ENCODE measurements at regions of chr1 and their contacts with region 1.

Region 1: DNA sequence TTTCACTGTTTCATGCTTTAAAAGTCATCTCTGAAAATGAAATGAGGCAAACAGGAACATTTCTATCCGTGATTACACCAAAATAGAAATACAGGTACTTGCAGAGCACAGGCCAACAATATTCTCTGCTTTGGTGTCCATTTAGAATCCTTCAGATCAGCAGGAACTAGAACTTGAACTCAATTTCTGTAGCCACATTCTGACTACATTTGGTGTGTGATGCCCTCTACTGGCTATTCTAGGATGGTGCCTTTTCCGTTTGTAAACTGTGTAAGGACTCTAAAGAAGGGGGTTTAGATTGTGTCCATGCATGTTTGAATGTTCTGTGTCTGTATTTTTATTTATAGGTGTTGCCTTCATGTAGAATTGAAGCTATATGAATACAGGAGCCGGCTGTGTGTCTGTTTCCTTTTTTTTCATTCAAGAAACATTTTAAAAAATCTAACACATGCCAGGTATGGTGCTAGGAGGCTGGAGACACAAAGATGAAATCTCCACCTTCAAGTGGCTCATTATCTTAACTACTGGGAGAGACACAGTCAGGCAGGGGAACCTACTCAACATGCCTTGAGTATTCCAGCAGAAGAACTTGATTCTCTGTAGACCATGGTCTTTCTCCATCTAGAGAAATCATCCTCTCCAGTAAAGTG is 7.6 kb upstream of the ZNF326 start:
- DNase-seq: peak; percentile 51 to 91
- H3K4me3 ChIP-seq: no peak overlapping the region
- H3K27ac ChIP-seq: no peak overlapping the region
- H3K4me1 ChIP-seq: peaks cover 0 to 4% (median 2%) of the 10 kb centered on the region in 4 donors
- H3K27me3 ChIP-seq: no peaks in the 10 kb centered on the region
- CTCF ChIP-seq: peak in 5 of 7 experiments; percentile 74 to 90 (median 80)
- EP300 ChIP-seq: no peak
- POLR2A ChIP-seq: no peak

Region 2: DNA sequence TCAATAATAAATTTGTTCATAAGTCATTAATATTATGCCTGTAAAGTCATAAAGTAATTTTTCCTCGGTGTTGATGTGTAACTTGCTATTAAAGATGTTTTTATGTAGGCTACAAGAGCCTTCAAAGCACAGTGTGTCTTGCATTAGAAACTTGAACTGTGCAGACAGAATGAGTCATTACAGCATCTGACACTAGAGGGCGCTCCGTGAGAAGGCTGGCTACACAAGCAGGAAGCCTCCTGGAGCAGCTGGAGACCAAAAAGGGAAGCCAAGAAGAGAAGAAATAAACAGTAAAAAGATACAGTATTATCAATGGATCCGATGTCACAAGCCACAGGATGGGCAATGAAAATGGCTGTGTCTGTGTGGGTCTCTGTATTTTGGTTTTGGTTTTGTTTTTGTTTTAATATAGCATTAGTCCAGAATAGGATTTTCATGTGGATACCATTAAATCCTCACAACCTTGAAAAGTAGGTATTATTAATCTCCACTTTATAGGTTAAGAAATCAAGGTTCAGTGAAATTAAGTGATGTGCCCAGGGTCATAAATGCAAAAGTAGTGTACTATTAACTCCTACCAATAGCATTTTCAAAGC is 182.6 kb before region 1 on chr1:
- intact Hi-C with region 1: loop called (anchors 5 kb)
- DNase-seq: peak; percentile 91 to 95
- H3K4me3 ChIP-seq: no peak overlapping the region
- H3K27ac ChIP-seq: no peak overlapping the region
- H3K4me1 ChIP-seq: peaks cover 0 to 5% (median 2%) of the 10 kb centered on the region in 4 donors
- H3K27me3 ChIP-seq: no peaks in the 10 kb centered on the region
- CTCF ChIP-seq: peak in 5 of 7 experiments; percentile 81 to 86 (median 83)
- EP300 ChIP-seq: no peak
- POLR2A ChIP-seq: no peak

Region 3: DNA sequence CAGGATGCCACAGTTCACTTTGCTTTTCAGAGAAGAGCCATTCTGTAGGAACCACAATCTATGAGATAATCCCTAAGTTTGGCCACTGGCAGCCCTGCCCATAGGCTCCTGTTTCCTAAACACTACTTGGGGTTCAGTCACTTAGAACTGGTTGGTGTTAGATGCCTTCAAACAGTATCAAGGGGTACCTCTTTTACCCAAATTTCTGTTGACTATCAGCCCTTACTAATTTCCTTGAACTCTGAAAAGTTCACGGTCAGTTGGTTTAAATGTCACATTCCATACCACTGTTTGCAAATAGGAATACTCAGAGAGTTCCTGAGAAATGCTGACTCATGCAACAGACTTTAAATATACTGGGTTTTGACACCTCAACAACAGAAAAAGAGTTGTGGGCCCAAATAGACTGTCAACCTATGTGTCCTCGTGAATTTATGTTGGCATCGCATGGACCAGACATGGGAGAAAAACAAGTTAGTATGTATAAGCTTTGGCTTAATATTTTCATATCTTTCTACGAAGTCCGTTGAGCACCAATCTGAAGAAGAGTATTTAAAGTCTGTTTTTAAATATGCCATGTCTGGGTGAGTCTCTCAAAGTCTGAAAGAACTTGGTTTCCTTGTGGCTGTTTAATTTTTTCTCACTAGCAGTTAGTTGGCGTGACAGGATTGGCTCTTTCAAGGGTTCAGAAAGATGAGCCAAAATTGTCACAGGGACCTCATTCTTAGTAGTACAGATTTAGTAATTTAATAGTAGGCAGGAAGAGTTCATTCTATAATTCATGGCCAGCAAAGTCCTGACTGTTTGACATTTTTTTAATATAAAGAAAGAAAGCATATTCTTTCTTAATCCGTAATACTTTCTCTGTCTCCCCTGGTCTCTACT is 48.9 kb before region 1 on chr1:
- intact Hi-C with region 1: no loop called
- DNase-seq: no peak
- H3K4me3 ChIP-seq: no peak overlapping the region
- H3K27ac ChIP-seq: no peak overlapping the region
- H3K4me1 ChIP-seq: peaks cover 0 to 11% (median 7%) of the 10 kb centered on the region in 4 donors
- H3K27me3 ChIP-seq: no peaks in the 10 kb centered on the region
- CTCF ChIP-seq: no peak
- EP300 ChIP-seq: no peak
- POLR2A ChIP-seq: no peak

Region 4: GRCh38 chr1:91104712-91105111 is 1117.4 kb after region 1 on chr1:
- intact Hi-C with region 1: no loop called
- DNase-seq: no peak
- H3K4me3 ChIP-seq: no peak overlapping the region
- H3K27ac ChIP-seq: no peak overlapping the region
- H3K4me1 ChIP-seq: no peaks in the 10 kb centered on the region
- H3K27me3 ChIP-seq: no peaks in the 10 kb centered on the region
- CTCF ChIP-seq: no peak
- EP300 ChIP-seq: no peak
- POLR2A ChIP-seq: no peak